ENCODE measurements at regions of chr21 and their contacts with region 1.

Region 1: DNA sequence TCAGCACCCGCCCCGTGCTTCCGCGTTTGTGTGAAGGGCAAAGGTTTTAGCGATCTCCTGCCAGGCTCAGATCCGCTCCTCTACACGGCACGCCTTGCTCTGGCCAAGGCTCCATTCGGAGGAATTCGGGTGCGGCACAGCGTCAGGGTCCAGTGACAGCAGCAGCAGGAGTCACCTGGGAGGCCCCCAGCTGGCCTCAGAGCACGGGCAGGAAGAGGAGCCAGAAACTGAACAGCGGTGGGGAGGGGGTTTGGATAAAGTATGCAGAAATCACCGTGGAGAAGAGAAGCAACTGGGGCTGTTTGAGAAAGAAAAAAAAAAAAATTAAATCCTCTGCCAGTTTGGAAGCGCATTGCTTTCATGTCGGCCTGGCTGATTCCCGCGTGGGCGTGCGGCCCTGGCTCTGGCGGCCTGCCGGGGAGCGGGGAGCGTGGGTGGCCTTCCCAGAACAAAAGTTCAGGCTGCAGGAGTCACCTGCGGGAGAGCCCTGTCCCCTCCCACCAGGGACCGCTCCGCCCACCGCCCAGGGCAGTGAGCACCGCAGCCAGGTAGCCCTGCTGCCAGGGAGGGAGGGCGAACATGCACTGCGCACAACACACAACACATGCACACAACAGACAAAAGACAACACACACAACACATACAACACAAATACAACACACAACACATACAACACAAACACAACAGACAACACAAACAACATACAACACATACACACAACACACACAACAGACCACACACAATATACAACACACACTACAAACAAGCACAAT is 107.6 kb downstream of the ETS2 start:
- DNase-seq: peak; percentile 65 to 80 (median 73)
- ATAC-seq: peak; percentile 57 to 80 (median 72)
- H3K4me3 ChIP-seq: peak overlapping the region in 7 of 12 donors; percentile 15 to 34 (median 31)
- H3K27ac ChIP-seq: peak overlapping the region; percentile 48 to 87 (median 70)
- H3K4me1 ChIP-seq: peaks cover 0 to 65% (median 34%) of the 10 kb centered on the region in 12 donors
- H3K27me3 ChIP-seq: no peaks in the 10 kb centered on the region
- CTCF ChIP-seq: no peak
- POLR2A ChIP-seq: no peak

Region 2: DNA sequence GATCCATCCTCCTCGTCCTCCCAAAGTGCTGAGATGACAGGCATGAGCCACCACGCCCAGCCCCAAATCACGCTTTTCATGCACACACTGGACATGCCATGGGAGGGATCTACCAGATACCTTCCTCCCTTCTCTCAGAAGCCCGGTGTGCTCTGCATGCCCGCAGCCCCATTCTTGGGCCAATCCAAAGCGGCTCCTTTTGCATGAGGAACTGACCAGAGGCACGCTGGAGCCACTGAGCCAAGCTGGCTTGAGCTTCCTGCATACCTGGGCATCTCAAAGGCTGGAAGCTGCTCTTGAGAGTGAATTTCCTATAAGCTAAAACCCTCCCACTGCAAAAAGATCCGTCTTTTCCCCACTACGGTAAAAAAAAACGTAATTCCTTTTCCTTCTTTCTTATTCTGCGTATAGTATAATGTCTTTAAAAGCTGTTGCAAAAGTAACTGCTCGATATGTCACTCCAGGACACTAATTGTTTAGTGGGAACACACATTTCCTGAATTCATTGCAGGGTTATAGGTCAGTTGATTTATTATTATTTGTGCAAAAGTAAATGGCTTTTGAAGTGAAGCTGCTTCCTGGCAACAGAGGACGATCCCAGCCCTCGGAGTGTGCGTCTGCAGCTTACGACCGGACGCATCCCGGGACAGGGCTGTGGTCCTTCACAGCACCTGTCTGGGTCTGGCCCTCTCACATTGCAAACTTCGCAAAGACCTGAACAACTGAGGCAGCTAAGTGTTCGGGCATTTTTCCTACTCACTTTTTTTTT is 169.4 kb before region 1 on chr21:
- intact Hi-C with region 1: loop called in 3 of 10 experiments (anchors 10 kb)
- DNase-seq: peak in 2 of 5 donors; percentile 32 to 62
- ATAC-seq: peak; percentile 39 to 95 (median 64)
- H3K4me3 ChIP-seq: peak overlapping the region in 5 of 12 donors; percentile 2 to 24 (median 16)
- H3K27ac ChIP-seq: peak overlapping the region in 9 of 12 donors; percentile 10 to 62 (median 46)
- H3K4me1 ChIP-seq: peaks cover 0 to 20% (median 0%) of the 10 kb centered on the region in 12 donors
- H3K27me3 ChIP-seq: no peaks in the 10 kb centered on the region
- CTCF ChIP-seq: no peak
- POLR2A ChIP-seq: no peak

Region 3: GRCh38 chr21:38819714-38820183 is 93.6 kb before region 1 on chr21:
- intact Hi-C with region 1: loop called in 1 of 10 experiments (anchors 5 kb)
- DNase-seq: no peak
- ATAC-seq: no peak
- H3K4me3 ChIP-seq: no peak overlapping the region
- H3K27ac ChIP-seq: peak overlapping the region in 4 of 12 donors; percentile 0 to 67 (median 31)
- H3K4me1 ChIP-seq: peaks cover 3 to 74% (median 31%) of the 10 kb centered on the region in 12 donors
- H3K27me3 ChIP-seq: no peaks in the 10 kb centered on the region
- CTCF ChIP-seq: no peak
- POLR2A ChIP-seq: no peak

Region 4: DNA sequence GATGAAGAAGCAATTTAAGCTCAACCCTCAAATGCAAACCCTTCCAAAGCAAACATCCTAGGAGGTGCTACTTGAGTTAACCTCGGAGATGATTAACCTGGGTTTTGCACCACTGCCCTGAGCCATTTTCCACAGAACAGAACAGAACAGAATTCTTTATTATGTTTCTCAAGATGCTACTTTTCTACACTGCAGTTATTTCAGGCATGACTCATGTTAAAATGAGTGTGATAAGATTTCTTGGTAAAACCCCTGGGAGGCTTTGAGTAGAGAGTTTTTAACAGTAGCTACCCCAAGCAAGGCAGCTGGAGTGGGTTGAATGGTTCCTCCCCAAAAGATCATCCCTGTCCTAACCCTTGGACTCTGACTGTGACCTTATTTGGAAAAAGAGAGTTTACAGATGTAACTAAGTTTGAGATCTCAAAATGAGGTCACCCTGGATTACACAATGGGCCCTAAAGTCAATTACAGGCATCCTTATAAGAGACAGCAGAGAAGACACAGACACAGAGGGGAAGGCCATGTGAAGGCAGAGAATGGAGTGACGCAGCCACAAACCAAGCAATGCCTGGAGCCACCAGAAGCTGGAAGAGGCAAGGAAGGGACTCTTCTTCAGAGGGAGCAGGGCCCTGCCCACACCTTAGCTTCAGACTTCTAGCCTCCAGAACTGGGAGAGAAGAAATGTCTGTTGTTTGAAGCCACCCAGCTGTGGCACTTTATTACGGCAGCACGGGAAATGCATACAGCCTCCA is 45.8 kb after region 1 on chr21:
- intact Hi-C with region 1: no loop called
- DNase-seq: peak in 4 of 5 donors; percentile 34 to 50 (median 46)
- ATAC-seq: peak; percentile 31 to 85 (median 76)
- H3K4me3 ChIP-seq: no peak overlapping the region
- H3K27ac ChIP-seq: peak overlapping the region in 11 of 12 donors; percentile 25 to 82 (median 64)
- H3K4me1 ChIP-seq: peaks cover 0 to 46% (median 25%) of the 10 kb centered on the region in 12 donors
- H3K27me3 ChIP-seq: no peaks in the 10 kb centered on the region
- CTCF ChIP-seq: no peak
- POLR2A ChIP-seq: no peak

Region 5: DNA sequence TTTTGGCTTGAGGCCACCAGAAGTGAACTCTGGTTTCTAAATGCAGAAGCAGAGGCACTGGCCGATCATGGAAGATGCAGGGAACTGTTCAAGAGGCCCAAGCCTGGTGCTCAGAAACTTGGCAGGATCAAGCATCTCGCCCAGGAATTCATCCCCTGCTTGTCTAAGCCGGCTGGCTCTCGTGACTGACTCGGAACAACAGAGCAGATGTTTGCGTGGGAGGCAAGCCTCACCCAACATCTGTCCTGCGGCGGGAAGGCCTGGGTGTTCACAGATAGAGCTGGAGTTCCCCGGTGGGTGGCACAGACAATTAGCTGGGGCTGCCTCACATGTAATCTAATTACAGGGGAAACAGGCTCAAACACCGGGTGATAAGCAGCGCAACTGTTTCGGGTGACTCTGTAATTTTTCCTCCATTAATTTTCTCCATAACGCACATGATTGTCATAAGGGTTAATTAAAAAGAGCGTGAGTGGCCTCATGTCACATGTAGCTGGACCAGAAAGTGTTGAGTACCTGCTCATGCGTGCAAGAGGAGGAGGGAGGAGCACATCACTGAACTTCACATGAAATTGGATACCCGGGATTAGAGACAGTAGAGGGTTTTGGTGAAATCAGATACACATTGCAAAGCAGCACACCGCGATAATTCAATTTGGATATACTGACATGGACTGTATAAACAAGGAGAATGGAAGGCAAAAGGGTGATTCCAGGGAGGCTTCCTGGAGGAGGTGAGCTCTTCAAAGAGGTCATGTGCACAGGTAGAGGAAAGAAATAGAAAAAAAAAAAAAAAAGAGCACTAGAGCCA is 72.5 kb after region 1 on chr21:
- intact Hi-C with region 1: loop called in 6 of 10 experiments (anchors 5 kb)
- DNase-seq: peak; percentile 74 to 89 (median 82)
- ATAC-seq: peak; percentile 53 to 74 (median 70)
- H3K4me3 ChIP-seq: no peak overlapping the region
- H3K27ac ChIP-seq: peak overlapping the region in 10 of 12 donors; percentile 10 to 75 (median 58)
- H3K4me1 ChIP-seq: peaks cover 7 to 68% (median 63%) of the 10 kb centered on the region in 12 donors
- H3K27me3 ChIP-seq: no peaks in the 10 kb centered on the region
- CTCF ChIP-seq: no peak
- POLR2A ChIP-seq: no peak

Region 6: GRCh38 chr21:39004634-39005501 is 91.6 kb after region 1 on chr21:
- intact Hi-C with region 1: loop called in 2 of 10 experiments (anchors 5 to 10 kb)
- DNase-seq: peak; percentile 73 to 84 (median 78)
- ATAC-seq: peak; percentile 54 to 66 (median 60)
- H3K4me3 ChIP-seq: no peak overlapping the region
- H3K27ac ChIP-seq: peak overlapping the region; percentile 75 to 92 (median 83)
- H3K4me1 ChIP-seq: peaks cover 9 to 87% (median 59%) of the 10 kb centered on the region in 12 donors
- H3K27me3 ChIP-seq: no peaks in the 10 kb centered on the region
- CTCF ChIP-seq: no peak
- POLR2A ChIP-seq: no peak

Region 7: GRCh38 chr21:39088831-39089380 is 175.6 kb after region 1 on chr21:
- intact Hi-C with region 1: loop called in 1 of 10 experiments (anchors 10 kb)
- DNase-seq: peak in 3 of 5 donors; percentile 48 to 75 (median 56)
- ATAC-seq: peak in 3 of 4 donors; percentile 47 to 68 (median 48)
- H3K4me3 ChIP-seq: no peak overlapping the region
- H3K27ac ChIP-seq: peak overlapping the region in 9 of 12 donors; percentile 82 to 100 (median 93)
- H3K4me1 ChIP-seq: peaks cover 0 to 76% (median 30%) of the 10 kb centered on the region in 12 donors
- H3K27me3 ChIP-seq: no peaks in the 10 kb centered on the region
- CTCF ChIP-seq: peak in 5 of 12 donors; percentile 16 to 45 (median 27)
- POLR2A ChIP-seq: no peak

Measured in heart left ventricle (tissue), 16 donors.